HCT116 (cell line): ENCODE measurements at regions of chr5 and their contacts with region 1.

Region 1: GRCh38 chr5:159773062-159773924 is 143.0 kb upstream of the ADRA1B start:
- DNase-seq: peak; percentile 44
- ATAC-seq: peak; percentile 91
- H3K4me3 ChIP-seq: peak overlapping the region; percentile 29 to 56
- H3K27ac ChIP-seq: peak overlapping the region; percentile 56
- H3K4me1 ChIP-seq: peaks cover 9 to 34% of the 10 kb centered on the region in 2 experiments; a peak in 3 of 4 replicates
- H3K27me3 ChIP-seq: no peaks in the 10 kb centered on the region
- CTCF ChIP-seq: peak; percentile 20 to 47 (median 23); a peak in 2 of 6 replicates
- POLR2A ChIP-seq: no peak
- RAD21 ChIP-seq: peak; percentile 57

Region 2: GRCh38 chr5:159581502-159582249 is 191.6 kb before region 1 on chr5:
- CTCF ChIA-PET with region 1: no interaction called
- POLR2A ChIA-PET with region 1: no interaction called
- RAD21 ChIA-PET with region 1: no interaction called
- intact Hi-C with region 1: loop called (anchors 5 kb)
- DNase-seq: peak; percentile 94
- ATAC-seq: peak; percentile 68
- H3K4me3 ChIP-seq: no peak overlapping the region
- H3K27ac ChIP-seq: peak overlapping the region; percentile 49; the same call in 1 of the 2 replicates
- H3K4me1 ChIP-seq: peaks cover 28 to 40% of the 10 kb centered on the region in 2 experiments
- H3K27me3 ChIP-seq: no peaks in the 10 kb centered on the region
- CTCF ChIP-seq: peak in 2 of 3 experiments; percentile 23 to 39; a peak in 2 of 6 replicates
- POLR2A ChIP-seq: no peak
- RAD21 ChIP-seq: peak; percentile 54

Region 3: GRCh38 chr5:159902444-159903121 is 129.3 kb after region 1 on chr5:
- CTCF ChIA-PET with region 1: no interaction called
- POLR2A ChIA-PET with region 1: no interaction called
- RAD21 ChIA-PET with region 1: no interaction called
- intact Hi-C with region 1: loop called (anchors 5 kb)
- DNase-seq: peak; percentile 65
- ATAC-seq: peak; percentile 66
- H3K4me3 ChIP-seq: peak overlapping the region in 1 of 2 experiments; percentile 34; a peak in 2 of 4 replicates
- H3K27ac ChIP-seq: no peak overlapping the region
- H3K4me1 ChIP-seq: peaks cover 38 to 62% of the 10 kb centered on the region in 2 experiments
- H3K27me3 ChIP-seq: peaks cover under 1% of the 10 kb centered on the region; the same call in 1 of the 2 replicates
- CTCF ChIP-seq: no peak
- POLR2A ChIP-seq: no peak
- RAD21 ChIP-seq: no peak